HEK293T (cell line): ENCODE measurements at regions of chr2 and their contacts with region 1.

Region 1: GRCh38 chr2:157302492-157303099 is 23.0 kb downstream of the ERMN start:
- DNase-seq: peak; percentile 62

Region 2: DNA sequence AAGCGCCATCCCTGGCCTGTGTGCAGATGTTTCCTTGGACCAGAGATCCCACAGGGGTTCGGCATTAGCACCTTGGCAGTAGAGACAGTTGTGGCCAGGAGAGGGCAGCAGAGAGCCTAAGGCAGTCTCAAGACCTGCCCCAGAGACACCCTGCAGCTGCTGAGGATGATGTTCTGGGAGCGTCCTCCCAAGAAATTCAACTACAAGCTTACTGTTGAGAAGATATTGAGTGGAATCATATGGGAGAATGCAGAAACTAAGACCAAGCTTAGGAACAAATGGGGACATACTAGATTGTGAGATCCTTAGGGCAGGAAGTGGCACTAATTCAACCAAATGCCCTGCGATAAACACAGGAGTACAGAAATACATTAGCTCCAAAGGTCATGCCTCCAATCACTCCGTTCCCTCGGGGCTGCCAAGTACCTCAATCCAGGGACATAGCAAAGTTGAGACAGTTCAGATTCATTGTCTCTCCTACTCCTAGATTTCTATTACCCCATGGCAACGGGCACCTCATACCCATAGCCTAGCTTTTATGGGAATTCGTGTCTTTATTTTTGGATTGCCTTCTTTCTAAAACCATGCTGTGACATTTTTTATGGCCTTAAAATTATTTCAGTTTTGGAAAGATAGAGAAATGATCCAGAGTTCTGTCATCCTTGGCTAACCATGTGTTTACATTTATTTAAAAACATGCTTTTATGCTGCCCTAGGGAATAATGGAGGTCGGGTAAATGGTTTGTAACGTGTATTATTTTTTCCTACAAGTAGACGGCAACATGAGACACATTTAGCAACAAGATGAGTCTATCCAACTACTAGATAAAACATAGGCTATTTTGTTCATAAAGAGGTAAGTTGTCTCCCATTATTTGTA is 25.3 kb after region 1 on chr2:
- CTCF ChIA-PET with region 1: interaction called, 25 read pairs
- POLR2A ChIA-PET with region 1: no interaction called
- DNase-seq: peak; percentile 85

Region 3: GRCh38 chr2:157336137-157337010 is 33.8 kb after region 1 on chr2:
- CTCF ChIA-PET with region 1: interaction called, 16 read pairs
- POLR2A ChIA-PET with region 1: no interaction called
- DNase-seq: peak; percentile 60